Posterior vena cava (tissue), 2 donors: ENCODE measurements at regions of chr4 and their contacts with region 1.

Region 1: GRCh38 chr4:169885893-169886292 is 128.1 kb upstream of the HPF1 start:
- DNase-seq: no peak

Region 2: GRCh38 chr4:169902658-169903345 is 16.9 kb after region 1 on chr4:
- intact Hi-C with region 1: no loop called
- DNase-seq: no peak

Region 3: GRCh38 chr4:169968999-169969398 is 83.1 kb after region 1 on chr4:
- intact Hi-C with region 1: loop called in 1 of 2 experiments (anchors 5 kb)
- DNase-seq: no peak

Region 4: DNA sequence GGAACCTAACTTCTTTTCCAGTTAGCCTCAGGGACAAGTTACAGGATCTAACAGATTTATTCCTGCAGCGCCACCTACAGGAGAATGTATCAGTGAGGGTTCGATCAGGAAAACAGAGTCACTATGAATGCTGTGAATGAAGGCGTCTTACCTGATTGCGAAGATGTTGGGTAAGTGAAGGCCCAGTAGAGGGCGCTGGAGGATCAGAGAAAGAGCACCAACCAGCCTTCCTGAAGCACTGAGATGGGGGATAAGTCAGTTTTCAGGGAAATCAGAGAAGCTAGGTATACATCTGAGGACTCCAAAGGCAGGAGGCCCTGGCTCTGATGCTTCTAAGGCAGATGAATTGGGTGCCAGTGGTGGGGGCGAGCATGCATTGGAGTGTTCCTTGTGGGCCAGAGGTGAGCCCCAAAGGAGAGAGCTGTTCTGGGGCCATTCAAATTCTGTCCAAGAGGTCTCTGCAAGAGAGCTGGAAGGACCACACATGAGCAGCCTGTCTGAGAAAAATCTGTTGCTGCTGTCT is 373.8 kb after region 1 on chr4:
- intact Hi-C with region 1: loop called in 1 of 2 experiments (anchors 5 kb)
- DNase-seq: no peak